Cardiac septum (tissue), 1 donor: ENCODE measurements at regions of chr2 and their contacts with region 1.

Region 1: GRCh38 chr2:239035361-239036078 is 187.6 kb downstream of the TWIST2 start:
- DNase-seq: peak; percentile 83

Region 2: DNA sequence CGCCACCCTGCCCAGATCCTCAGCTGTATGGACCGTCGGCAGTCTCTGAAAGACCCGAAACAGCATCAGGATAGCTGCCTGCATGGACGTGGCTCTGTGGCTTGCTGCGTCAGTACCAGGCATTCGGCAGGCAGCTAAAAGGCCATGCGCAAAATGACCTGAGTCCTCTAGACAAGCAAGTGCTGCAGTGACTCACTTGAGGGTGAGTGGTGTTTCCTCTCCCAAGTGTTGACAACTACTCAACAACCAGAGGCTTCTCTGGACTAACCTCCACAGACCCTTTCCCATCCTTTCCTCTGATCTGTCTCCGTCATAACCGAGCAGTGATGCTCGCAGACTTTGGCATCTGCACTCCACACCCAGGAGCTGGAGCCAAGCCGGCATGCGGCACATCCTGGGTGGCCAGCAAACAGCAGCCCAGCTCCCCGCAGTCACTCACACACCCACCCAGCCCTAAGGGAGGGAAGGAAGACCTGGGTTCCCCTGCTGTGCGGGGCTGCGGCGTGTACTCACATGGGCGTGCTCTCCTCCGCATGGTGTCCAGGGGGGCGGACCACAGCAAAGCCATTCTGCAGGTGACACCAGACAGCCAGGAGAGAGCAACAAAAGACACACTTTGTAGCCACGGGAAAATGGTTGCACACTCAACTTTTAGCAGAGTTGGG is 51.7 kb after region 1 on chr2:
- intact Hi-C with region 1: no loop called
- DNase-seq: no peak

Region 3: GRCh38 chr2:239106314-239106908 is 70.9 kb after region 1 on chr2:
- intact Hi-C with region 1: loop called (anchors 5 kb)
- DNase-seq: no peak

Region 4: DNA sequence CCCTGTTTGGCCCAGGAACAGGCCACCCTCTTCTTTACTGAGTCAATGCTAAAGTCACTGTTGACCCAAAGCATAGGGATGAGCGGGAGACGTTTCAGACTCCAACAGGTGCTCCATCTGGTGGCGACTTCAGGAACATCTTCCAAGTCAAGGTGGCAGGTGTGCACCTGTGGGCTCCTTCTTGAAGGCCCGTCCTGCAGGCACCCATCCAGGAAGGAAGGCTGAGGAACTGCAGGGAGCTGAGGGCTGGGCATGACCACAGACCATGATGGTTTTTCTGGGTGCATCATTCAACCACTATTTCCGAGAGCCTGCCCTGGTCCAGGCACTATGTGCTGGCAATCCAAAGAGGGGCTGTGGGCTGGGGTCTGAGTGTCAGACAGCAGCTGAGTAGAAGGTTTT is 846.8 kb after region 1 on chr2:
- intact Hi-C with region 1: loop called (anchors 5 kb)
- DNase-seq: no peak

Region 5: DNA sequence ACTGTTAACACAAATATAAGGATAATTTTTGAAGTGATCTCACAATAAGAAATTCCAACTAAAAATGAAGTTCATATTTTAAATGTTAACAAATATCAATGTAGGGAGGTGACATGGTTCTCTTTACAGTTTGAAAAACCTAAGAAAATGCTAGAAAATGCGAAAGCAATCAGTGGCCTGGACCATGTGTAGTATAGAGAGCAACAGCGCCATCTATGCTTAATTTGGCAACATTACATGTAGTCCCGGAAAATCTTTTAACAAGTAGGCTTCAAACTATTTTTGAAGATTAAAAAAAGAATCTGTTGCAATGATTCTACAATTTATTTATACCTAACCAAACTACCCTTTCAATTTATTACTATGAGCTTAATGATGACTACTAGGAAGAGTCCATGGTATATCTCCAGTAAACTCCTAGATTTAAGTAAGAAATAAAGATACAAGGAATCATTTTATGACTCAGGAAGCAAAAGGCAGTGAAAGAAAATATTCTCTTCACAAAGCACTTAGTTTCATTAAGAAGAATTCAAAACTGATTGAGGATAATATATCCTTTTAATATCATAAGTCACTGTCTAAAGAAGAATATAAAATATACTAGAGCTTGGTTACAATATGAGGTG is 956.3 kb after region 1 on chr2:
- intact Hi-C with region 1: loop called (anchors 10 kb)
- DNase-seq: no peak

Region 6: DNA sequence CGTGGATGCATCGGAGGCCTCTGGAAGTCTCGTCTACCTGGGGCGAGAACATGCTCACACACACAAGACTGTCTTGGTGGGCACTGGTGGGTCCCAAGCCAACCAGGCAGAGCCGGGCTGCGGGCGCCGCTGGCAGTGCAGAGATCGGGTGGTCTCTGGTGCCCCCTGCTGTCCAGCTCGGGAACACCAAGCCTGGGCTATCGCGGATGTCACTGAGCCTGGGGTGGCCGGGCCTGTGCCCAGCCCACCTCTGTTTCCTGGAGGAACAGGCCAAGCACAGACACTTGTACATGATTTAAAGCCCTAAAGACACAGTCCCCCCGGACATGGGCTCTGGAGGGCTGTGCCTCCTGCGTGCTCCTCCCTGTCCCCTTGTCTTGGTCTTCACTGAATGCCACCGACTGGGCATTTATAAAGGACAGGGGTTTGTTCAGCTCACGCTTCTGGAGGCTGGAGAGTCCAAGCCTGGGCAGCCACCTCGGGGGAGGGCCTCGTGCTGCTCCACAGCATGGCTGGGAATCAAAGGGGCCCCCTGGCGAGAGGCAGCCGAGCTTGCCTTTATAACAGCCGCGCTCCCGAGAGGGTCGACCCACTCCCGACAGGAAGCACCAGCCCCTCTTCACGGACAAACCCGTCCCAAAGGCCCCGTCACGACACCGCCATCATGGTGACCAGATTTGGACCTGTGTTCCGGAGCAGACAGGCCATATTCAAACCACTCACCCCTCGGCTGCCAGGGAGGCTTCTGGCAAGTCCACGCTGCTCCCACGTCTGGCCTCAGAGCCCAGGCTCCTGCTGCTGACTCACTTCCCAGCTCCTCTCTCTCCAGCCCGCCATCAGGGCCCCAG is 1108.5 kb after region 1 on chr2:
- intact Hi-C with region 1: loop called (anchors 5 kb)
- DNase-seq: peak; percentile 88